ENCODE measurements at regions of chr20 and their contacts with region 1.

Region 1: DNA sequence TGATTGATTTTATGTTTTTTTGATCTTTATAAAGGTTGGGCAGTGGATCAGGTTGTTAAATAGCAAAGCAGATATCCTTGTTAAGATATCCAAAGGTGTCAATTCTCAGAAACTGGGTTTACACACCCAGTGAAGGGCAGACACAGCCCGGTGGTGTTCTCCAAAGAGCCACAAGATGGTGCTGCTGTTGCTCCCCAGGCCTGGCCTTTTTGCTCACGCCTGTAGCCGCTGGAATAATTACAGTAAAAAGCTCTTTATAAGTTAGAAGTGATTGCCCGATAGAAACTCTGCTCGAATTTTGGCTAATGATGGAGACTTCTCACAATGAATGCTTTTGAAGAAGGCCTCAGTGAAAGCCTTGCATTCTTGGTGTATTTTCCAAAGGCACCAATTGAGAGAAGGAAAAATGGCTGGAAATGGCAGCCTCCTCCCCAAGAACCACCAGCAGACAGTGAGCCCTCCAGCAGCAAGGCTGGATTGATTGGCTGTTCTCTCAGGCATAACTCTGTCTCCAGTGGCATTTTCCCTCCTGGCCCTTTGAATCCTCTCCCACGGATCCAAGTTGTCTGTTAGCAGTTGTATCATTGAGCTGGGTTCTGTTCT is 120.5 kb upstream of the CHD6 start:
- DNase-seq: peak in 3 of 5 donors; percentile 21 to 41 (median 25)
- ATAC-seq: peak in 3 of 4 donors; percentile 67 to 80 (median 69)
- H3K4me3 ChIP-seq: no peak overlapping the region
- H3K27ac ChIP-seq: no peak overlapping the region
- H3K4me1 ChIP-seq: no peaks in the 10 kb centered on the region
- H3K27me3 ChIP-seq: no peaks in the 10 kb centered on the region
- CTCF ChIP-seq: peak; percentile 63 to 84 (median 76)
- POLR2A ChIP-seq: no peak

Region 2: GRCh38 chr20:43408848-43409576 is 1670.3 kb after region 1 on chr20:
- intact Hi-C with region 1: loop called in 2 of 10 experiments (anchors 10 kb)
- DNase-seq: no peak
- ATAC-seq: no peak
- H3K4me3 ChIP-seq: no peak overlapping the region
- H3K27ac ChIP-seq: no peak overlapping the region
- H3K4me1 ChIP-seq: no peaks in the 10 kb centered on the region
- H3K27me3 ChIP-seq: peaks cover 0 to 10% (median 0%) of the 10 kb centered on the region in 9 donors
- CTCF ChIP-seq: peak in 10 of 12 donors; percentile 3 to 37 (median 30)
- POLR2A ChIP-seq: no peak